PC-9 (cell line): ENCODE measurements at regions of chr15 and their contacts with region 1.

Region 1: DNA sequence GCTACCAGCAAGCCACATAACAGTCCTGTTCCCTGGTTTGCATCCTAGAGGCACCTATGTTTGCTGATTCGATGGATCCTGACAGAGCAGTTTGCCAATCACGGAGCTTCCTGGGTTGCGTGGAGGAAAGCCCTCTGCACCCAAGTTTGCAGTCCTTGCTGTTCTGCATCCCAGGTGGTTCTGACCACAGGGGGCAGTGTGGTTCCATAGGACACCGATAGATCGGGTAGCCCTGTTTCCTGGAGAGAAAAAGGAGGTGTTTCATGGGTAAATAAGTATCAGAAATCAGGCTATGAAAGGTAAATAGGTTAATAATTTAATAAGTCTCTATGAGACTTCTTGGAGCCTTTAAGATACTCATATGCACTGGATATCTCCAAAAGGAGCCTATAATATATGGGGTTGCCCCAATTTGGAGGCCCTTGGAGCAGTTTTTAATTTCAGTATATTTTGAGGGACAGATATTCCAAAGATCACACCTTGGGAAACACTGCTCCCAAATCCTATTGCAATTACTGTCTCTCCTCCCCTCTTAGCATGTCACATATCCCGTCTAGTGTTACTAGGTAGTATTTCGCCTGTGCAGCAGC is 194.6 kb upstream of the TPM1 start:
- DNase-seq: peak in 1 of 2 experiments; percentile 46
- H3K4me3 ChIP-seq: no peak overlapping the region
- H3K27ac ChIP-seq: peak overlapping the region; percentile 73
- H3K4me1 ChIP-seq: peaks cover 69% of the 10 kb centered on the region
- H3K27me3 ChIP-seq: no peaks in the 10 kb centered on the region
- CTCF ChIP-seq: peak; percentile 75

Region 2: GRCh38 chr15:62658498-62658897 is 189.5 kb before region 1 on chr15:
- CTCF ChIA-PET with region 1: no interaction called
- POLR2A ChIA-PET with region 1: interaction called, 13 read pairs
- intact Hi-C with region 1: no loop called
- DNase-seq: no peak
- H3K4me3 ChIP-seq: no peak overlapping the region
- H3K27ac ChIP-seq: no peak overlapping the region
- H3K4me1 ChIP-seq: no peaks in the 10 kb centered on the region
- H3K27me3 ChIP-seq: no peaks in the 10 kb centered on the region
- CTCF ChIP-seq: no peak

Region 3: DNA sequence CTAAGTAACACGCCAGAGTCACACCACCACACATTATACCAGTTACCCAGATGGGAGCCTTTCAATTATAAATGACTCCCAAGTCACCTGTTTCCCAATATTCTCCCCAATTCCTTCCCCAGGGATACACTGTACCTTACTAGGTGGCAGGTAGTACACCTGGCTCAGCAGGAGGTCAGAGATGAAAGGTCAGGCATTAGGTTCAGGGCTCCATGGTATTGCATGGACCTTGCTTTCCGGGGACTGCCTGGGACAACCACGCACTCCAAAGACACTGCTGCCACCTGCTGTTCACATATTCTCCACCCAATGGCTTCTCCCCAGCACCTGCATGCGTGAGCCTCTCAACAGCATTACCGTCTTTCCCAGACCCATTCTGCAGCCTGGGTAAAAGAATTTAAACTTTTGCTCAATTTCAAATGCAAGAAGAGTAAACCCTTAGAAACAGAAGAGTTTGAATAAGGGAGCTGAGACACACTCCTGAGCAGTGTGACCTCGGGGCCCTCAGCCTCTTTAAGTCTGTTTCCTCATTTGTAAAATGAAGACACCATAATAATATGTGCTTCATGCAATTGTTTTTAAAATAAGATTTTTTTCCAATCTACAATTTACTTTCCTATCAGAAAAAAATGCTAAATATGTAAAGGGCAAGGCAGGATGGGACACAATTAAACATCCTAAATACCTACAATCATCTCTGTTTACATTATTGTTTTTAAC is 245.7 kb after region 1 on chr15:
- CTCF ChIA-PET with region 1: interaction called, 3 read pairs
- POLR2A ChIA-PET with region 1: no interaction called
- intact Hi-C with region 1: loop called (anchors 5 kb)
- DNase-seq: peak in 1 of 2 experiments; percentile 70
- H3K4me3 ChIP-seq: no peak overlapping the region
- H3K27ac ChIP-seq: no peak overlapping the region
- H3K4me1 ChIP-seq: no peaks in the 10 kb centered on the region
- H3K27me3 ChIP-seq: no peaks in the 10 kb centered on the region
- CTCF ChIP-seq: peak; percentile 78